Endothelial cell of umbilical vein (primary cell): ENCODE measurements at regions of chr3 and their contacts with region 1.

Region 1: DNA sequence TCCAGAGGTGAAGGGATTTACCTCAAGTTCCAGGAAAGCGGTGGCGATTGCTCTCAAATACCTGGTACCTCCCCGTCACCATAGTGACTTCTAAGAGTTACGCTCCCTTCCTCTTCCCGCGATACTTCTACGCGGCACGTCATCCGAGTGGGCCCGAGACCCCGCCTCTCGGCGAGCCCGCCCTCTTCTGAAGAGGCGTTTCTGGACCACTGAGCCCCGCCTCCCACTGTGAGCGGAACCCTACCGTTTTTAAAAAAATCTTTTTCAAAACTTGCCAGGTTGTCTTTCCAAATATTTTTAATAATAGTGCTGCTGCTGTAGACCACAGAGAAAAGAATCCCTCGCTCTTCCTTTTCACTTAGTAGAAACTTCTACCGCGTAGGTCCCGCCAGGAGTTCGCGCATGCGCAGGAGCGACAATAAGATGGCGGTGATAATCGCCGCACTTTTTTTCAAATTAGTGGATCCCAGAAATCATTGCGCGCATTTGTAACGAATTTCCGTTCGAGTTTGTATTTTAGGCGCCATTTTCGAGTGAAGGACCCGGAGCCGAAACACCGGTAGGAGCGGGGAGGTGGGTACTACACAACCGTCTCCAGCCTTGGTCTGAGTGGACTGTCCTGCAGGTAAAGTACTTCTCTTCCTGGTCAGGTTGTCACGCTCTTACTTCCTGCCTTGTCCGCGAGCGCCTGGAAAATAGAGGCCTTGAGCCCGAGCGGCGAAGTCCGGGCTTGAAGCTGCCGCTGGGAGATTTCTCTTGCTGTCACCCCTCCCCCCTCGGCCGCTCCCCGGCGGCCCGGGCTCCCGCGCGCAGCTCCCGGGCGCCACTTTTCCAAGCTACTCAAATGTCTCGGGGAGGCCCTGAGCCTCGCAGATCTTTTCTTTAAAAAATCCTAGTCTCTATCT is at the starts of genes IFT80 and SMC4:
- DNase-seq: peak; percentile 97
- H3K4me3 ChIP-seq: peak within 1 kb of the TSS; percentile 77 to 79 (median 78)
- H3K27ac ChIP-seq: peak within 1 kb of the TSS; percentile 76
- H3K4me1 ChIP-seq: peaks cover 16% of the 10 kb centered on the region
- H3K27me3 ChIP-seq: no peaks in the 10 kb centered on the region
- CTCF ChIP-seq: no peak
- POLR2A ChIP-seq: peak; percentile 52
- total RNA-seq, gene IFT80: 21.4 and 22.5 TPM in 2 replicates
- total RNA-seq, gene SMC4: 126 and 153 TPM in 2 replicates

Region 2: GRCh38 chr3:159804726-159805410 is 594.5 kb before region 1 on chr3:
- CTCF ChIA-PET with region 1: no interaction called
- POLR2A ChIA-PET with region 1: no interaction called
- dilution Hi-C with region 1: no loop called
- intact Hi-C with region 1: no loop called
- DNase-seq: peak; percentile 85
- H3K4me3 ChIP-seq: no peak overlapping the region
- H3K27ac ChIP-seq: peak overlapping the region; percentile 19
- H3K4me1 ChIP-seq: peaks cover 18% of the 10 kb centered on the region
- H3K27me3 ChIP-seq: no peaks in the 10 kb centered on the region
- CTCF ChIP-seq: peak; percentile 92 to 96
- POLR2A ChIP-seq: no peak

Region 3: GRCh38 chr3:159852821-159853505 is 546.4 kb before region 1 on chr3:
- CTCF ChIA-PET with region 1: no interaction called
- POLR2A ChIA-PET with region 1: no interaction called
- dilution Hi-C with region 1: no loop called
- intact Hi-C with region 1: loop called (anchors 10 kb)
- DNase-seq: peak; percentile 97
- H3K4me3 ChIP-seq: peak overlapping the region in 2 of 3 experiments; percentile 45 to 52
- H3K27ac ChIP-seq: peak overlapping the region; percentile 97
- H3K4me1 ChIP-seq: peaks cover 70% of the 10 kb centered on the region
- H3K27me3 ChIP-seq: no peaks in the 10 kb centered on the region
- CTCF ChIP-seq: no peak
- POLR2A ChIP-seq: peak; percentile 2

Region 4: DNA sequence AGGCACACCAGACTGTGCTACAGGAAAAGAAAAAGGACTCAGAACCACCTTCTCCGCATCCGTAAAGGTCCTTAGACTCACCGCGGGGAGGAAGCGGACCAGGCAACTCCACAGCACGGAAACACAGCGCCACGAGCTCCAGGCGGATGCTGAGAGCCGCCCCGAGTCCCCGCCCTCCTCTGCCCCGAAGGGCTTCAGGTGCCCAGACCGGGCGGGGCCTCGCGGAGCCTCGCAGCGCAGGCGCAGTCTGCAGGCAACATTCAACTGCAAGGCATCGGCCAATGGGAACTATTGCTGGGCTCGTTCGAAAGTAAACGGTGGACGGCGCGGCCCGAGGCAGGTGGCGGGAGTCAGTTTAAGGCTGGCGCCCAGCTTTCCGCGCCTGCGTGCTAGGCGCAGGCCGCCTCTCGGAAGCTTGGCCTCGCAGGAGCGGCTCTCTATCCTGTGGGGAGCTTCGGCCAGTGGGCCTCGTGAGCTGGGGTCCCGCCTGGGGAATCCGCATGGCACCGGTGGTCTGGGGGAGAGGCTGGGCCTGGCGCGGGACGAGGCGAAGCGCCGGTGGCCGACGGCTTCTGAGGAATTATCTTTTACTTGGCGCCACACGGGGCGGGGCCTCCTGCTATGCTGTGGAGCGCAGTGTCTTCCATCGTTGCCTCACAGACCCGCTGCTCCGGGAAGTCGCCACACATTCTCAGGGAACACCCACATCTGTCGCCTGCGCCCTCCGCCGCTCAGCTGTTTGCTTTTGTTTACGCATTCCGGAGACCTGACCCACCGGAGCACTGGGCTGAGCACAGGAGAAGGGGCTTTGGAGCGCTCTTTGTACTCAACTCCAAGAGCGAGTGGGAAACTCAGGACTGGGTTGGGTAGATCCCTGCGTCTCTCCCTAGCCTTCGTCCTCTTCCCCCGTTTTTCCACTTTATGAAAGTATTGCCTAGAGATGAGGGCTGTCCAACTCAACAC is 50.5 kb after region 1 on chr3 and contains the start of gene TRIM59:
- CTCF ChIA-PET with region 1: no interaction called
- POLR2A ChIA-PET with region 1: no interaction called
- dilution Hi-C with region 1: no loop called
- intact Hi-C with region 1: loop called (anchors 1 kb)
- DNase-seq: peak; percentile 98
- H3K4me3 ChIP-seq: peak within 1 kb of the TSS; percentile 52 to 85 (median 74)
- H3K27ac ChIP-seq: peak within 1 kb of the TSS; percentile 55
- H3K4me1 ChIP-seq: peaks cover 21% of the 10 kb centered on the region
- H3K27me3 ChIP-seq: no peaks in the 10 kb centered on the region
- CTCF ChIP-seq: no peak
- POLR2A ChIP-seq: peak; percentile 88
- total RNA-seq, gene TRIM59: 32.5 and 33.0 TPM in 2 replicates

Region 5: DNA sequence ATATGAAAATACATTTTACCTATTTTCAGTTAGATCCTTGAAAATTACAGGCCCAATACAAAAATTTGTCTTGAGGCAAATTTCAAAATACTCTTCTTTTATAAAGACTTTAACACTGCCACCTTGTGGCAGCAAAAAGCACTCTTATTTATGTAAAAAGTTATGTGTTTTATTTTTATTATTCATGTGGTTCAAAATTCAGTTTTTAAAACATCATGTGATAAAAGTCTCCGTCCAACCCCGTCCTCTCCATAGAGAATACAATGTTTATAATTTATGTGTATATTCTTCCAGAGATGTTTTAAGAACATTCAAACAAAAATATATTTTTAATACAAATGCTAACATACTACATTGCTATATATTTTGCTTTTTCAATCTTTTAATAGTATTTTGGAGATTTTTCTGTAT is 87.1 kb after region 1 on chr3:
- CTCF ChIA-PET with region 1: no interaction called
- POLR2A ChIA-PET with region 1: no interaction called
- dilution Hi-C with region 1: no loop called
- intact Hi-C with region 1: no loop called
- DNase-seq: peak; percentile 44
- H3K4me3 ChIP-seq: no peak overlapping the region
- H3K27ac ChIP-seq: no peak overlapping the region
- H3K4me1 ChIP-seq: peaks cover 5% of the 10 kb centered on the region
- H3K27me3 ChIP-seq: no peaks in the 10 kb centered on the region
- CTCF ChIP-seq: peak; percentile 30 to 36
- POLR2A ChIP-seq: no peak

Region 6: DNA sequence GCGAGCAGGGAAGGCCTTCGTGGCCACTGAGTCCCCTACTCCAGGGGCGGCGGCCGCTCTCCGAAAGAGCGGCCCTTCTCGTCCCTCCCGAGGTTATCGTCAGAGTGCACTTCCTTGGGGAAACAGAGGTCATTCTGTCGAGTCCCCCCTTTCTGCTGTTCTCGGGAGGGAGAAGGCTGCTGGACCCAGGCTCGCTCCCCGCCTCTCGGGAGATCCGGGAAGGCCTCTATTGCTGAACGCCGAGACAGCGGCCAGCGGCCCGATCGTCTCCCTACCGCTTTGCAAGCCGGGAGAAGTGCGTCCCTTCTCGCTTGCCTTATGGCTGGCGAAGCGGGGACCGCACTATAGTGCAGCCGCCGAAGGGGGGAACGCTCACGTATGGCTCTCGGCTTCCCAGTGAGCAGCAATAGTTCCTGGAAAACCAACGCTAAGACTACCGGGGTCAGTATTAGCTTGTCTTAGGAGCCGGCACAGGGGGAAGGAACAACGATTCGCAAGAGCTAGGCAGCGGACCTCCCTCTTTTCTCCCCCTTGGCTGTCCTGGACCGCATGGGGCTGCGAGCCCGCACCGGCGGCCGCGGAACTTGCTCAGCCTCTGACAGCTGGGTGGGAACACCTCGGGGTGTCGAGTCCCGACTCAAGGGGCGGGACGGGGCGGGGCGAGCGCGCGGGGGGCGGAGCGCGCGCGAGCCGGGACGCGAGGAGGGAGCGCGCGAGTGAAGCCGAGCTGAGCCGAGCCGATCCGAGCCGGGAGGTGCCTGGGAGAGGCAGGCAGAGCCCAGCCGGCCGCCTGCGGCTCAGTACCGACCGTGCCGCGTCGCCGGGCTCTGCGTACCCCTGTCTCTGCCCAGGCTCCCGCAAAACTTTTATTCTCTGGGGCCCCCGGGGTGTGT is 355.7 kb after region 1 on chr3:
- CTCF ChIA-PET with region 1: no interaction called
- POLR2A ChIA-PET with region 1: no interaction called
- dilution Hi-C with region 1: no loop called
- intact Hi-C with region 1: loop called (anchors 5 kb)
- DNase-seq: peak; percentile 95
- H3K4me3 ChIP-seq: peak overlapping the region; percentile 49 to 80 (median 71)
- H3K27ac ChIP-seq: peak overlapping the region; percentile 84
- H3K4me1 ChIP-seq: peaks cover 8% of the 10 kb centered on the region
- H3K27me3 ChIP-seq: peaks cover 5 to 13% of the 10 kb centered on the region in 2 experiments
- CTCF ChIP-seq: no peak
- POLR2A ChIP-seq: no peak